ENCODE measurements at regions of chr2 and their contacts with region 1.

Region 1: DNA sequence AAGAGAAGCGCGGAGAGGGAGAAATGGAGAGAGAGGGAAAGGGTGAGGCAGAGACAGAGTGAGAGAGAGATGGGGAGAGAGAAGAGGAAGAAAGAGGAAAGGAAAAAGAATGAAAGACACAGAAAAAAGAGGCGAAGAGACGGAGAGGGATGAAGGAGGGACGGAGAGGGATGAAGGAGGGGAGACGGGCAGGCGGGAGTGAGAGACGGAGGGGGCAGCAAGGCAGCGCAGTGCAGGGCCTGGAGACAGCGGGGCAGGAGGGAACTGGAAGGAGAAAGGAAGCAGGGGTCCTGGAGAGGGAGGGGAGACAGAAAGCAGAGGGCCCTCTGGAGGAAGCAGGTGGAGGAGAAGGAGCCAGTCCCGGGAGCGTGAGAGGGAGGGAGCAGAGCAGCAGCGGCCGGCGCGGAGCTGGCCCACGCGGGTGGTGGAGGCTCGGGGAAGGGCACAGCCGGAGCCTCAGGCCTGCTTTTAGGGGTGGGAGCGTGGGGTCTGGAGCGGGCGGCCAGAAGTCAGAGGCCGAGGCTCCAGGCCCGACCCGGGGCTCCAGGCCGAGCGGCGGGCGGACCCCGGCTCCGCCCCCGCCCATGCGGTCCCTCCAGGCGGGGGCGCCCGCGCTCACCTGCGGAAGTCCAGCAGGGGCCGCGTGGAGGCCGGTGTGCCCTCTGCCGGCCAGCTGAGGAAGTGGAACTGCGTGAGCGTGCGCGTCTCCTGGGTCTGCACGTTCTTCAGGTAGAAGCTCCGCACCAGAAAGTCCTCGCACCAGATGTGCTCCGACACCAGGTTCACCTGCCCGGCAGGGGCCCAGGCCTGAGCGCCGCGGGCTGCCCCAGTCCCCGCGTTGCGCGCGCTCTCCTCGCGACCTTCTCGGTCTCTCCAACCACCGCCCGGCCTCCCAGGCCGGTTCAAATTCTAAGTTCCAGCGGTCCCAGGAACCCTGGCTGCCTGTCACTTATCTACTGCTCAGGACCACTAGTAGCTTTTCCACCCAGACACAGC is 14.5 kb downstream of the PTPRN start:
- DNase-seq: peak; percentile 90
- ATAC-seq: peak; percentile 93
- H3K4me3 Mint-ChIP-seq: peak overlapping the region; percentile 64
- H3K27ac Mint-ChIP-seq: peak overlapping the region; percentile 77
- H3K4me1 Mint-ChIP-seq: peaks cover 32% of the 10 kb centered on the region
- H3K27me3 Mint-ChIP-seq: peaks cover 3% of the 10 kb centered on the region
- CTCF ChIP-seq: peak; percentile 99

Region 2: DNA sequence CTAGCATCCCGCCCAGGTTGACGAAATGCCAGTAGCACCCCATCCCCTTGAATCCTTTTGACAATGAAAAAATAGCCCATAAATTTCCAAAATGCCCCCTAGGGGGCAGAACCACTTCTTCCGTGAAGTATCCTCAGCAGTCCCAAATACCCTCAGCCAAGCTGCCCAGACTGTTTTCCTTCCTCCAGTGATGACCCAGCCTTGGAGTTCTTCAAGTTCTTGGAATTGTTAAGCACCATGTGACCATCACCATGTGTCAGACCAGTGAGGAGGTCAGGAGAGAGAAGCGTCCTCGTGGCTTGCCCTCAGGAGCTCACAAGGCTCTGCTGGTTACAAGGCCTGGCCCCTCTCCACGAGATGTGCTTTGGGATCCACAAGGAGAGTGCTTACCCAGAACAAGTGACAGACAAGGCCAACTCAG is 123.4 kb before region 1 on chr2:
- CTCF ChIA-PET with region 1: interaction called, 28 read pairs
- POLR2A ChIA-PET with region 1: no interaction called
- intact Hi-C with region 1: no loop called
- DNase-seq: peak; percentile 42
- ATAC-seq: peak; percentile 53
- H3K4me3 Mint-ChIP-seq: no peak overlapping the region
- H3K27ac Mint-ChIP-seq: no peak overlapping the region
- H3K4me1 Mint-ChIP-seq: peaks cover 34% of the 10 kb centered on the region
- H3K27me3 Mint-ChIP-seq: no peaks in the 10 kb centered on the region
- CTCF ChIP-seq: peak; percentile 94

Region 3: GRCh38 chr2:219218732-219219701 is 75.6 kb before region 1 on chr2 and contains the start of gene ABCB6:
- CTCF ChIA-PET with region 1: interaction called, 19 read pairs
- POLR2A ChIA-PET with region 1: interaction called, 5 read pairs
- intact Hi-C with region 1: no loop called
- DNase-seq: peak; percentile 95
- ATAC-seq: peak; percentile 92
- H3K4me3 Mint-ChIP-seq: peak within 1 kb of the TSS; percentile 88
- H3K27ac Mint-ChIP-seq: peak within 1 kb of the TSS; percentile 77
- H3K4me1 Mint-ChIP-seq: peaks cover 25% of the 10 kb centered on the region
- H3K27me3 Mint-ChIP-seq: no peaks in the 10 kb centered on the region
- CTCF ChIP-seq: no peak
- total RNA-seq, gene ABCB6: 32.3 to 35.7 TPM

Region 4: GRCh38 chr2:219253753-219254590 is 40.7 kb before region 1 on chr2 and contains the start of gene TUBA4A:
- CTCF ChIA-PET with region 1: interaction called, 48 read pairs
- POLR2A ChIA-PET with region 1: interaction called, 25 read pairs
- intact Hi-C with region 1: loop called (anchors 5 kb)
- DNase-seq: peak; percentile 92
- ATAC-seq: peak; percentile 73
- H3K4me3 Mint-ChIP-seq: peak within 1 kb of the TSS; percentile 77
- H3K27ac Mint-ChIP-seq: peak within 1 kb of the TSS; percentile 94
- H3K4me1 Mint-ChIP-seq: peaks cover 46% of the 10 kb centered on the region
- H3K27me3 Mint-ChIP-seq: no peaks in the 10 kb centered on the region
- CTCF ChIP-seq: no peak
- total RNA-seq, gene TUBA4A: 226 TPM

Region 5: GRCh38 chr2:219314804-219315468 is 20.3 kb after region 1 on chr2:
- CTCF ChIA-PET with region 1: interaction called, 12 read pairs
- POLR2A ChIA-PET with region 1: interaction called, 4 read pairs
- intact Hi-C with region 1: no loop called
- DNase-seq: no peak
- ATAC-seq: no peak
- H3K4me3 Mint-ChIP-seq: no peak overlapping the region
- H3K27ac Mint-ChIP-seq: no peak overlapping the region
- H3K4me1 Mint-ChIP-seq: no peaks in the 10 kb centered on the region
- H3K27me3 Mint-ChIP-seq: peaks cover 10% of the 10 kb centered on the region
- CTCF ChIP-seq: no peak